Activated B cell treated with CpG ODN at 0.5 μM for 24 hours (primary cell): ENCODE measurements at regions of chr15 and their contacts with region 1.

Region 1: GRCh38 chr15:100341662-100342560 is at the start of gene ADAMTS17:
- DNase-seq: peak; percentile 70
- ATAC-seq: peak; percentile 99
- H3K4me3 Mint-ChIP-seq: peak within 1 kb of the TSS; percentile 50
- H3K27ac Mint-ChIP-seq: no peak within 1 kb of the TSS
- H3K4me1 Mint-ChIP-seq: peaks cover 9% of the 10 kb centered on the region
- H3K27me3 Mint-ChIP-seq: peaks cover 29% of the 10 kb centered on the region
- CTCF ChIP-seq: no peak
- total RNA-seq, gene ADAMTS17: 1.6 TPM in 1 of 2 replicates, not detected in the other

Region 2: DNA sequence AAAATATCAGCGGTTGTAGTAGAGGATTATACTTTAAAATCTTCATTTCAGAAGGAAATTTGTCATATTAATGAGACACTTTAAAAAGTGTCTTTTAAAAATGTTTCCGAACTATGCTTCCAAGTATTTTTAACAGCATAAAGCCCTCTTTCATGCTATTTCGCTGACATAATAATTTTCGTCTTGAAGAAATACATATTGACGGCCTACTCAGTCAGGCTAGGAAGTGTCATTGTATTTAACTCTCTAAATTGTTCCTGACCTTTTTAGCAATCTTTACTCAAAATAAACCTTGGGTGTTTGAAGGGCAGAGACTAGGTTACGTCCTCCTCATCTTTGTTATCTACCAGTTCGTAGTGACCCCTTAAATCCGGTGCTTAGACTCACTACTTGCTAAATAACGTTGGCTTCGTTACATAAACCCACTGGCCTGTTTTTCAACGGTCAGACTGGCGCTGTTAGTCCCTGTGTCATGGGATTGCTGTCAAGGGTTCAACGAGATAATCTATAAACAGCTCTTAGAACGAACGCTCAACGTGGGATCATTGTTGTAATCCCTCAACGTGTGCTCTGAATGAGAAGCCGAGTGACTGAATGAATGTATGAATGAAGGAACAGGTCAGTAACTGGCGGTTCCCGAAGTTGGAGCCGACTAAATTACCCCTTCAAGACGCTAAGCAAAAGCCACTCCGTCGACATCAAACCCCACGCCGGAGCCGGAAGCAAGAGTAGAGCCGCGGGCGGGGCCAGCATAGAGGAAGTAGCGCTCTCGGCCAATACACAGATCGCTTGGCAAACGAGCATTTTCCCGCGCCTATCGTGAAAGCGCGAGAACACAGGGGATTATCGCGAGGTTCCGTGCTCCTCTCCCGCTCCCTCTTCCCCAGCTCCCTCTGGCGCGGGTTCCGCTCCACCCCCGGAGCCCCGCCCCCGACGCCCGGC is 1091.1 kb before region 1 on chr15:
- CTCF ChIA-PET with region 1: no interaction called
- POLR2A ChIA-PET with region 1: no interaction called
- intact Hi-C with region 1: loop called (anchors 1 kb)
- DNase-seq: peak; percentile 85
- ATAC-seq: peak; percentile 97
- H3K4me3 Mint-ChIP-seq: peak overlapping the region; percentile 91
- H3K27ac Mint-ChIP-seq: peak overlapping the region; percentile 89
- H3K4me1 Mint-ChIP-seq: peaks cover 29% of the 10 kb centered on the region
- H3K27me3 Mint-ChIP-seq: no peaks in the 10 kb centered on the region
- CTCF ChIP-seq: no peak

Region 3: DNA sequence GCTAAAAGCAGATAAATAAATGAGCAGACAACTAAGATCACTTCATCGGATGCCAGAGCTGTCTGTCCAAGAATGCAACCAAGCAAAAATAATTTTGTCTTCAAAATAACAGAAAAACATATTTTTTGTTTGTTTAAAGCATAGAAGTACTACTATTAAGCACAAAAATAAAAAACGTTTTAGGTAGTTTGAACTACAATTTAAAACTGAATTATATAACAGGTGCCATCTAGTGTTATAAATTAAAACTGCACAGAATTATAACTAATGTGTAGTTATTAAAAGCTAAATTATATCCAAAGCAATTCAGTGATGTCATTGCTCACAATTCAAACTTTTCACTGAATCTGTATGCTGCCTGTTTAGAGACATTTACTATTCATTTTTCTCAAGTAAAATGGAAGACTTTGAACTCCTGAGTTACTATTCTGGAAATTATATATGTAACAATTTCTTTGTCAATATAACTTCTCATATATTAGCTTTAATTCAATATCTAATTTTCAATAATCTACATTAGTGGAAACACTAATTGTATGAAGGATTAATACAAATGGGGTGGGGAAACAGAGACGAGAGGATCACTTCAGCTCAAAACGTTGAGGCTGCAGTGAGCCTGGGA is 230.6 kb after region 1 on chr15:
- CTCF ChIA-PET with region 1: interaction called, 80 read pairs
- POLR2A ChIA-PET with region 1: no interaction called
- intact Hi-C with region 1: loop called (anchors 1 kb)
- DNase-seq: no peak
- ATAC-seq: peak; percentile 31
- H3K4me3 Mint-ChIP-seq: no peak overlapping the region
- H3K27ac Mint-ChIP-seq: no peak overlapping the region
- H3K4me1 Mint-ChIP-seq: peaks cover 3% of the 10 kb centered on the region
- H3K27me3 Mint-ChIP-seq: no peaks in the 10 kb centered on the region
- CTCF ChIP-seq: no peak